Activated B cell treated with CpG ODN at 0.5 μM for 24 hours (primary cell): ENCODE measurements at regions of chr4 and their contacts with region 1.

Region 1: GRCh38 chr4:27010334-27010940 is 149.8 kb downstream of the STIM2 start:
- DNase-seq: peak; percentile 31
- ATAC-seq: peak; percentile 85
- H3K4me3 Mint-ChIP-seq: no peak overlapping the region
- H3K27ac Mint-ChIP-seq: peak overlapping the region; percentile 80
- H3K4me1 Mint-ChIP-seq: peaks cover 5% of the 10 kb centered on the region
- H3K27me3 Mint-ChIP-seq: no peaks in the 10 kb centered on the region
- CTCF ChIP-seq: peak; percentile 95

Region 2: GRCh38 chr4:25993395-25994185 is 1016.8 kb before region 1 on chr4:
- CTCF ChIA-PET with region 1: no interaction called
- POLR2A ChIA-PET with region 1: no interaction called
- intact Hi-C with region 1: loop called (anchors 1 kb)
- DNase-seq: no peak
- ATAC-seq: peak; percentile 70
- H3K4me3 Mint-ChIP-seq: no peak overlapping the region
- H3K27ac Mint-ChIP-seq: no peak overlapping the region
- H3K4me1 Mint-ChIP-seq: peaks cover 8% of the 10 kb centered on the region
- H3K27me3 Mint-ChIP-seq: no peaks in the 10 kb centered on the region
- CTCF ChIP-seq: no peak

Region 3: DNA sequence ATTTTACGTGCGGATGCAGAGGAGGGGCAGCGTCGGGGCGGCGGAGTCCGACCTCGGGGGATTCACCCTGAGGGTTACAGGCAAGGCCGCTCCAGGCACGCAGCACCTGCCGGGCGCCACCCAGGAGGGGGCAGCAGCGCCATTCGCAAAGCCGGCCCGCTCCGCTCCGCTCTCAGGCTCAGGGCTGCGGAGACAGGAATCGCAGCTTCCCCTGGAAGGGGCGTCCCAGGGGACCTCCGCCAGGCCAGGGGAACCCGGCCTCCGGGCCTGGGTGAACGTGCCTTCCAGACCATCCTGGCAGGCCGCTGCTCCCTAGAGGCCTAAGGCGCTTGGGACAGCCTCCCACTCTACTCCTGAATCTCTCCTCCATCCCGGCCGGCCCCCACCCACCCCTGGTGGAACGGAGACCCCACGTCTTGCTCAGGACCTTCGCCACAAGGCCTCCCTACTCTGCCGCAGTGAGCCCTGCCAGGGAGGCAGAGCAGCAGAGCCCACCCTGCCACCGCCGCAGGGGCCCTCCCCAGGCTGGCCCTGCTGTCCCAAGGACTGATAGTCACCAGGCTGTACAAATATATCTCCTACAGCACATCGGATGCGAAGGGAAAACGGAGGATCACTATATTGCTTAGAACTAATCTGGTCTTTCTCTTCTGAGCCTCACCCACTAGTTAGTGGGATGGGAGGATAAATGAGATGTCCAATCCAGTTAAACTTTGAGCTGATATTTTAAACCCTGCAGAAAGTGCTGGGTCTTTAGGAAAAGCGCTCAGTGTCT is 981.5 kb before region 1 on chr4:
- CTCF ChIA-PET with region 1: no interaction called
- POLR2A ChIA-PET with region 1: no interaction called
- intact Hi-C with region 1: loop called (anchors 5 kb)
- DNase-seq: peak; percentile 55
- ATAC-seq: peak; percentile 92
- H3K4me3 Mint-ChIP-seq: no peak overlapping the region
- H3K27ac Mint-ChIP-seq: no peak overlapping the region
- H3K4me1 Mint-ChIP-seq: peaks cover 2% of the 10 kb centered on the region
- H3K27me3 Mint-ChIP-seq: peaks cover 13% of the 10 kb centered on the region
- CTCF ChIP-seq: no peak

Region 4: DNA sequence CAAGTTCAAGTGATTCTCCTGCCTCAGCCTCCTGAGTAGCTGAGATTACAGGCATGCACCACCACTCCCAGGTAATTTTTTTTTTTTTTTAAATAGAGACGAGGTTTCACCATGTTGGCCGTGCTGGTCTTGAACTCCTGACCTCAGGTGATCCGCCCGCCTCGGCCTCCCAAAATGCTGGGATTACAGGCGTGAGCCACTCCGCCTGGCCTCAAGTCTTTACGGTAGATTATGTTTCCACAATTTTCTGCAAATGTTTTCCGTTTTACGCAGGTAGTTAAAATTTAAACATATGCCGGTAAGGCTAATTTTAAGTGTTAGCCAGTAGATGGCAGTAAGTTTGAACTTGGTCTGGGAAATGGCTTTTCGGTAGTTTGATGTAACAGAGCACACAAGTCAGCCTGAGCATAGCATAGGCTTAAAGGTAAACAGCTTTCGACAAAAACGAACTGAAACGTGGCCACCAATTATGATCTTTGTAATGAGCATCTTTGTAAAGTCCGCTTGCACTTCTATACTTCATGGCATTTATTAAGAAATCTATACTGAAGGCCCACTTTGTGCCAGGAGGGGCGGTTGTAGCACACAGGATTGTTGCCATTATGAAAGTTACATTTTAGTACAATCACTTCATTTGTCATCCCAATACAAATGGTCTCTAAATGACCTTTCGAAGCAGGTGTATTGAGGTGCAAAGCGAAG is 551.2 kb before region 1 on chr4:
- CTCF ChIA-PET with region 1: interaction called, 63 read pairs
- POLR2A ChIA-PET with region 1: interaction called, 3 read pairs
- intact Hi-C with region 1: loop called (anchors 1 kb)
- DNase-seq: no peak
- ATAC-seq: peak; percentile 64
- H3K4me3 Mint-ChIP-seq: peak overlapping the region; percentile 55
- H3K27ac Mint-ChIP-seq: no peak overlapping the region
- H3K4me1 Mint-ChIP-seq: peaks cover 6% of the 10 kb centered on the region
- H3K27me3 Mint-ChIP-seq: peaks cover 4% of the 10 kb centered on the region
- CTCF ChIP-seq: no peak

Region 5: GRCh38 chr4:26787461-26788340 is 222.7 kb before region 1 on chr4:
- CTCF ChIA-PET with region 1: interaction called, 6 read pairs
- POLR2A ChIA-PET with region 1: no interaction called
- intact Hi-C with region 1: loop called (anchors 2 kb)
- DNase-seq: no peak
- ATAC-seq: peak; percentile 63
- H3K4me3 Mint-ChIP-seq: peak overlapping the region; percentile 13
- H3K27ac Mint-ChIP-seq: peak overlapping the region; percentile 32
- H3K4me1 Mint-ChIP-seq: peaks cover 37% of the 10 kb centered on the region
- H3K27me3 Mint-ChIP-seq: peaks cover 2% of the 10 kb centered on the region
- CTCF ChIP-seq: no peak